Panc1 (cell line): ENCODE measurements at regions of chr10 and their contacts with region 1.

Region 1: GRCh38 chr10:100009793-100010676 is at the start of gene DNMBP:
- DNase-seq: no peak
- ATAC-seq: peak; percentile 90
- H3K4me3 ChIP-seq: peak within 1 kb of the TSS; percentile 77 to 91
- H3K27ac ChIP-seq: peak within 1 kb of the TSS; percentile 99
- H3K4me1 ChIP-seq: peaks cover 26% of the 10 kb centered on the region
- H3K27me3 ChIP-seq: no peaks in the 10 kb centered on the region
- CTCF ChIP-seq: peak; percentile 99
- total RNA-seq, gene DNMBP: 39.3 TPM

Region 2: DNA sequence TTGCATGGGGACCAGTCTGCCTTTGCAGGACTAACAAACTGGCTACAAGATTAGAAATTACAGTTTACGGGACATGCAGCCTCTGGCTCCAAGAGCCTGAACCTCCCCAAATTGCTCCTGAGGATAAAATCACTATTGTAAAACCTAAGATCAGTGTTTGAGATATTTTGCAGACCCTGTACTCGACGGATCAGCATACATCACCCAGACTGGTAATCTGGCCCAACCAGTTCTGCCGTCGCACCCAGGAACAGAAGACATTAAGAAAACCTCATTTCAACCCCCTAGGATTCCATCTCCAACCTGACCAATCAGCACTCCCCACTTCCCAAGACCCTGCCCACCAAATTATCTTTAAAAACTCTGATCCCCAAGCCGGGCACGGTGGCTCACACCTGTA is 26.8 kb after region 1 on chr10:
- CTCF ChIA-PET with region 1: no interaction called
- POLR2A ChIA-PET with region 1: interaction called, 17 read pairs
- in situ Hi-C with region 1: no loop called
- intact Hi-C with region 1: no loop called
- DNase-seq: no peak
- ATAC-seq: no peak
- H3K4me3 ChIP-seq: no peak overlapping the region
- H3K27ac ChIP-seq: no peak overlapping the region
- H3K4me1 ChIP-seq: peaks cover 13% of the 10 kb centered on the region; the same call in 1 of the 2 replicates
- H3K27me3 ChIP-seq: no peaks in the 10 kb centered on the region
- CTCF ChIP-seq: no peak

Region 3: GRCh38 chr10:100046021-100046486 is 36.0 kb after region 1 on chr10:
- CTCF ChIA-PET with region 1: interaction called, 5 read pairs
- POLR2A ChIA-PET with region 1: interaction called, 4 read pairs
- in situ Hi-C with region 1: no loop called
- intact Hi-C with region 1: loop called (anchors 2 kb)
- DNase-seq: peak; percentile 72
- ATAC-seq: peak; percentile 93
- H3K4me3 ChIP-seq: no peak overlapping the region
- H3K27ac ChIP-seq: peak overlapping the region; percentile 44; the same call in 1 of the 2 replicates
- H3K4me1 ChIP-seq: peaks cover 26% of the 10 kb centered on the region
- H3K27me3 ChIP-seq: no peaks in the 10 kb centered on the region
- CTCF ChIP-seq: peak; percentile 99

Region 4: GRCh38 chr10:100053686-100054460 is 43.8 kb after region 1 on chr10:
- CTCF ChIA-PET with region 1: no interaction called
- POLR2A ChIA-PET with region 1: interaction called, 13 read pairs
- in situ Hi-C with region 1: no loop called
- intact Hi-C with region 1: no loop called
- DNase-seq: no peak
- ATAC-seq: no peak
- H3K4me3 ChIP-seq: no peak overlapping the region
- H3K27ac ChIP-seq: no peak overlapping the region
- H3K4me1 ChIP-seq: no peaks in the 10 kb centered on the region
- H3K27me3 ChIP-seq: no peaks in the 10 kb centered on the region
- CTCF ChIP-seq: no peak

Region 5: GRCh38 chr10:100081075-100082001 is 71.3 kb after region 1 on chr10 and contains the start of gene CPN1:
- CTCF ChIA-PET with region 1: no interaction called
- POLR2A ChIA-PET with region 1: no interaction called
- in situ Hi-C with region 1: no loop called
- intact Hi-C with region 1: loop called (anchors 2 kb)
- DNase-seq: no peak
- ATAC-seq: no peak
- H3K4me3 ChIP-seq: no peak within 1 kb of the TSS
- H3K27ac ChIP-seq: no peak within 1 kb of the TSS
- H3K4me1 ChIP-seq: no peaks in the 10 kb centered on the region
- H3K27me3 ChIP-seq: 0 out of 2 replicates have a peak, but pooled peaks cover 2% of the 10 kb centered on the region
- CTCF ChIP-seq: no peak
- total RNA-seq, gene CPN1: not detected

Region 6: GRCh38 chr10:100229819-100230422 is 219.9 kb after region 1 on chr10:
- CTCF ChIA-PET with region 1: interaction called, 4 read pairs
- POLR2A ChIA-PET with region 1: interaction called, 13 read pairs
- in situ Hi-C with region 1: no loop called
- intact Hi-C with region 1: no loop called
- DNase-seq: no peak
- ATAC-seq: no peak
- H3K4me3 ChIP-seq: peak overlapping the region; percentile 71 to 99
- H3K27ac ChIP-seq: peak overlapping the region; percentile 80
- H3K4me1 ChIP-seq: peaks cover 8% of the 10 kb centered on the region
- H3K27me3 ChIP-seq: no peaks in the 10 kb centered on the region
- CTCF ChIP-seq: no peak